Calu3 (cell line): ENCODE measurements at regions of chr12 and their contacts with region 1.

Region 1: GRCh38 chr12:118372541-118373495 is at the start of gene TAOK3:
- DNase-seq: peak; percentile 99
- H3K4me3 Mint-ChIP-seq: peak within 1 kb of the TSS; percentile 99
- H3K27ac Mint-ChIP-seq: peak within 1 kb of the TSS; percentile 93
- H3K4me1 Mint-ChIP-seq: peaks cover 16% of the 10 kb centered on the region
- H3K27me3 Mint-ChIP-seq: no peaks in the 10 kb centered on the region
- CTCF ChIP-seq: no peak
- total RNA-seq, gene TAOK3: 39.1 and 44.1 TPM in 2 replicates

Region 2: DNA sequence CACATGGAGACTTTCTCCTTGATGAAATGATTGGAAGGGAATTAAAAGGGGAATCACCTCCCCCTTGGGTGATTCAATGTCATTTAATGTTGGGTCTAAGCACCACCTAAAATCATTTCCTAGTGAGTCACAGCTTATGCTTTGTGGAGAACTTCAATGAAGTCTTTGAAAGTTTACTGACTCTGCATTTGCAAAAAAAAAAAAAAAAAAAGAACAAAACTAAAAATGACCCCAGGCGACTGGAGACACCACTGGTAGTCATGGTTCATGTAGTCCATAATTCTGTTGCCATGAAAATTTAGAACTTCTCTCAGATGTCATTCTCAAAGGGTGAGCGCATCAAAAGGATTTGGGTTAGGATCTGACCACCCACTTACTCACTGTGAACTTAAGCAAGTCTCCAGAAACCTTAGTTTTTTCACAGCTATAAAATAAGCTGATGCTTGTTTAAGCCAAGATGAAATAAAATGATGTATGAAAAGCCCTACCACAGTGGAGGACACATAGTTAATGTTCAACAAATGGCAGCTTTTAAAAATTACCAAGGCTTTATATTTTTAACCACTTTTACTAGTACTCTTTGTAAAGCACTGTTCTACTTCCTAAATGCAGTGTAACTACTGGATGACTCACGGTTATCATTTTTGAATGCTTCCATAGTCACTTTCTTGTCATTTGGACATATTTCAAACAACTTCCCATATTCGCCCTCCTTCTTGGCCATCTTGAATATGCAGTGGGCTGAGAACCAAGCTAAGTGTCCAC is 385.9 kb before region 1 on chr12:
- CTCF ChIA-PET with region 1: interaction called, 12 read pairs
- intact Hi-C with region 1: no loop called
- DNase-seq: no peak
- H3K4me3 Mint-ChIP-seq: no peak overlapping the region
- H3K27ac Mint-ChIP-seq: no peak overlapping the region
- H3K4me1 Mint-ChIP-seq: no peaks in the 10 kb centered on the region
- H3K27me3 Mint-ChIP-seq: no peaks in the 10 kb centered on the region
- CTCF ChIP-seq: no peak

Region 3: GRCh38 chr12:118120579-118121363 is 252.0 kb before region 1 on chr12:
- CTCF ChIA-PET with region 1: interaction called, 13 read pairs
- intact Hi-C with region 1: loop called (anchors 1 kb)
- DNase-seq: peak; percentile 73
- H3K4me3 Mint-ChIP-seq: no peak overlapping the region
- H3K27ac Mint-ChIP-seq: no peak overlapping the region
- H3K4me1 Mint-ChIP-seq: peaks cover 16% of the 10 kb centered on the region
- H3K27me3 Mint-ChIP-seq: no peaks in the 10 kb centered on the region
- CTCF ChIP-seq: peak; percentile 90

Region 4: DNA sequence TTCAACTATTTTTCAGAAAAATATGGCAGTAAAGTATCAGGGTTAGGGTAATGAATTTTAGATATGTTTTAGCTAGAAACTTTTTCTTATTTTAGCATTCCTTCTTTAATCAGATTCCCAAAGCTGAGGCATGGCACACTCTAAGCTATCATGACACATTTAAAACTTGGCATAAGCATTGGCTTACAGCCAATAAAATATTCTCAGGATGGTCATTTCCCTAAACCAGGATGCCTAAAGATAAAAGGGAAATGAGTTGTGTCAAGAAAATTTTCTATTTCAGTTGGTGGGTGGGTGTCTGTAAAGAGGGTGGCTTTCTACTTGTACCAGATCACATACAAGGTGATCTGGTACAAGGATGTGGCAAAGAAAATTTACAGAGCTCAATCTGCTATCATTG is 189.1 kb before region 1 on chr12:
- CTCF ChIA-PET with region 1: interaction called, 36 read pairs
- intact Hi-C with region 1: loop called (anchors 1 kb)
- DNase-seq: no peak
- H3K4me3 Mint-ChIP-seq: no peak overlapping the region
- H3K27ac Mint-ChIP-seq: no peak overlapping the region
- H3K4me1 Mint-ChIP-seq: peaks cover 46% of the 10 kb centered on the region
- H3K27me3 Mint-ChIP-seq: no peaks in the 10 kb centered on the region
- CTCF ChIP-seq: no peak

Region 5: DNA sequence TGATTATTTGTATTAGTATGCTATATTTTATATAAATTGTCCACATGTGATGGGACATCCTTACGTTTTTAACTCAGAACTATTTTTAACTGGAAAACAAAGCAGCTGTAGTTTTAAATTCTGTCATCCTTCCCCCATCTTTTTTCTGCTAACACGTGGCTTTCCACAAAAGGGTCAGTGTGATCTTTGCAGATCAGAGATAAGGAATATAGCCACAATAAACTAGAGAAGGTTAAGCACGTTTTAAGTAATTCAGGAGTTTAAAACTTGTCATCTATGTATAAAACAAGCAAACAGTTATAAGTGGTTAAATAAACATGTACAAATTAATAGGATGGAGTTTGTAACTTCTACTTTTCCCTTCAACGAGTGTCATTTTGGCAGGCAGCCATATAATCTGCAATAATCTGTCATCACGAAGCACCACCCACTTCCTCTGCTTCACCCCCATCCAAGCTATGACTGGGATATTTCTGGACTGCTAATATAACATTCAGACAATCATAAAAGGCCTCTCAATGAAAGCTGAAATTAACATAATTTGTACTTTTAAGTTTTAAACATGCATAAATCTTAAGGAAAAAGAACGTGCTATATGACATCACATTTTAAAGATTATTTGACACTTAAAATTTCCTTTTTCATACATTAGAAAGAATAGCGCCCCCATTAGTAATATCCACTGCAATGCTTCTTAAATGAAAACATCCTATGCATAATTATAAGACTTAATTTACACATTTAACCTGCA is 15.4 kb before region 1 on chr12:
- CTCF ChIA-PET with region 1: interaction called, 12 read pairs
- intact Hi-C with region 1: no loop called
- DNase-seq: peak; percentile 58
- H3K4me3 Mint-ChIP-seq: peak overlapping the region; percentile 74
- H3K27ac Mint-ChIP-seq: peak overlapping the region; percentile 93
- H3K4me1 Mint-ChIP-seq: peaks cover 24% of the 10 kb centered on the region
- H3K27me3 Mint-ChIP-seq: no peaks in the 10 kb centered on the region
- CTCF ChIP-seq: no peak